Activated T-helper 1 cell treated with anti-CD3 and anti-CD28 coated beads, Interleukin-12 subunit alpha, Interleukin-12 subunit beta, Interleukin-2, Interleukin-4 antibody, amounts not matched to agents 30 ng/mL and 10 ng/mL and 1 ng/mL, durations not matched to agents 14 hours and 24 hours and 36 hours (primary cell): ENCODE measurements at regions of chr11 and their contacts with region 1.

Region 1: DNA sequence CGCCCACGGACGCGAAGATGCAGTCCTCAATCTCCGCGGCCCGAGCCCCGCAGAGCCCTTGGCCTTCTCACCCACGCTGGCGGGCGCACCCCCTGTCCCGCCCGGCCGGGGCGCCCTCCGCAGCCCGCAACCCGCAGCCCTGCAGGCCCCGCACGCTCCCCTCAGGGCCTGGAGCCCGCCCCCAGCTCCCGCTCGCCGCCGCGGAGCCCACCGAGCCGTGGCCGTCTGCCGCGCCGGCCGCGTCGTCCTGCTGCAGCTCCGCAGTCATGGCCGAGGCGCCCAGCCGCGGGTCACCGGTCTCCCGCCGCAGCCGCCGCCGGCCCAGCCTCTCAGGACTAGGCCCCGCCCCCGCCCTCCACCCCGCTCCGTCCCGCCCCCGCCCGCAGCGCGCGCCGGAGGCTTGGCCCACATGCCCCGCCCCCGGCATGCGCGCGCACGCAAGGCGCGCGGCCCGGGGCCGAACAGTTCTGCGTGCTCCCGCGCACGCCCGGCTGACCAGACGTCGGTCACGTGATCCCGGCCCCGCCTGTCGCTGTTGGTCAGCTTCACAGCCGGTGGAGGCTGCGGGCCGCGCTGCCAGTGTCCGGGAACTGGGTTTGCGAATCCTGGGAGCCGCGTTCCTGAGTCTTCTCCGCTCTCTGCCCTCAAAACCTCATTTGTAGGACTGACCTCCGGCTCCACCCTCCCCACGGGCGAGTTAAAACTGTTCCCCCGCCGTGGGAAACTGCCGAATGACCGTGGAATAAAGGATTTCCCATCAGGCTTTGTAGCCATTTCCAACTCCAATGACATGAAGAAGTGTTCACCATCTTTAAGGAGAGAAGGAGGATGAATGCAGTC is at the start of gene USP28:
- DNase-seq: peak; percentile 81
- H3K4me3 Mint-ChIP-seq: peak within 1 kb of the TSS; percentile 98
- H3K27ac Mint-ChIP-seq: peak within 1 kb of the TSS; percentile 99
- H3K4me1 Mint-ChIP-seq: peaks cover 64% of the 10 kb centered on the region
- H3K27me3 Mint-ChIP-seq: no peaks in the 10 kb centered on the region
- total RNA-seq, gene USP28: 29.0 and 30.9 TPM in 2 replicates

Region 2: GRCh38 chr11:111938687-111939160 is 1936.7 kb before region 1 on chr11:
- intact Hi-C with region 1: loop called (anchors 10 kb)
- DNase-seq: peak; percentile 22
- H3K4me3 Mint-ChIP-seq: peak overlapping the region; percentile 88
- H3K27ac Mint-ChIP-seq: peak overlapping the region; percentile 92
- H3K4me1 Mint-ChIP-seq: peaks cover 58% of the 10 kb centered on the region
- H3K27me3 Mint-ChIP-seq: no peaks in the 10 kb centered on the region

Region 3: GRCh38 chr11:113314389-113315301 is 560.8 kb before region 1 on chr11 and contains the start of gene TTC12:
- intact Hi-C with region 1: loop called (anchors 1 kb)
- DNase-seq: peak; percentile 89
- H3K4me3 Mint-ChIP-seq: peak within 1 kb of the TSS; percentile 81
- H3K27ac Mint-ChIP-seq: peak within 1 kb of the TSS; percentile 70
- H3K4me1 Mint-ChIP-seq: peaks cover 20% of the 10 kb centered on the region
- H3K27me3 Mint-ChIP-seq: no peaks in the 10 kb centered on the region
- total RNA-seq, gene TTC12: 7.4 and 8.5 TPM in 2 replicates

Region 4: GRCh38 chr11:113806406-113806805 is 69.0 kb before region 1 on chr11:
- intact Hi-C with region 1: loop called (anchors 2 kb)
- DNase-seq: peak; percentile 8
- H3K4me3 Mint-ChIP-seq: no peak overlapping the region
- H3K27ac Mint-ChIP-seq: no peak overlapping the region
- H3K4me1 Mint-ChIP-seq: no peaks in the 10 kb centered on the region
- H3K27me3 Mint-ChIP-seq: no peaks in the 10 kb centered on the region

Region 5: DNA sequence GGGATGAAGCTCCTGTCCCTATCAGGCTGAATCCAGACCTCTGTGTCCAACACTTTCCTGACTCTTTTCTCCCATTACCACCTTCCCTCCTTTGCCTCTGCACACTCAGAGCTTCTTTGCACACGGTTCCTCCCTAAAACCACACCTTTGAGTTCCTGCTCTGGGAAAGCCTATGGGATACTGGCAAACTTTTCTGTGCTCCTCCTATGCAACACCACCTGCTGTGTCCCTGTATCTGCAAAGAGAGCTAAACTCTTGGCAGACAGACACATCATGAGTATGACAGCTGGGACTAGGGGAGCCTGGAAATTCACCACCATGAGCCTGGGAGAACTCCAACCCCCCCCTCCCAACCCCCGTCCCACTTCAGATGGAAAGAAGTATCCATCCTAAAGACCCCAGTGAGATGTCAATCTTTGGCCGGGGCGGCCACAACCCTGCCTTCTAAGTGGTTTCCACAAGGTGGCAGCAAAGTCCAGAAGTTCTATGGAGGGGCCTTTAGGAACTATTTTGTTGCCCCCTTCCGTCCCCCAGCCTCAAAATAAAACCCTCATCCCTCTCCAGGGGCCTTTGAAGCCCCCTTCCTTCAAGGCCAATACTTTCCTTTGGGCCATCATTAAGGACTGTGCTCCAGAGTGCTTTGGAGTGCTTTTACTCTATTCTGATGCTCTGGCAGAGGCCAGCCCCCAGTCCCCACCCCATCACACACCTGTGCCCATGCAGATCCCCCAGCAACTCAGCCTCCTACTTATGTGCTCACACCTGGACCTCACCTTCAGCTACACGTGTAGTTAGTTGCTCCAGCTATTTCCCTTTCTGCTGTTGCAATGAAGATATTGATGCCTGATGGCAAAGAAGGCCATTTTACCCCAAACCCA is 118.9 kb after region 1 on chr11:
- intact Hi-C with region 1: no loop called
- DNase-seq: no peak
- H3K4me3 Mint-ChIP-seq: no peak overlapping the region
- H3K27ac Mint-ChIP-seq: no peak overlapping the region
- H3K4me1 Mint-ChIP-seq: no peaks in the 10 kb centered on the region
- H3K27me3 Mint-ChIP-seq: peaks cover 7% of the 10 kb centered on the region

Region 6: DNA sequence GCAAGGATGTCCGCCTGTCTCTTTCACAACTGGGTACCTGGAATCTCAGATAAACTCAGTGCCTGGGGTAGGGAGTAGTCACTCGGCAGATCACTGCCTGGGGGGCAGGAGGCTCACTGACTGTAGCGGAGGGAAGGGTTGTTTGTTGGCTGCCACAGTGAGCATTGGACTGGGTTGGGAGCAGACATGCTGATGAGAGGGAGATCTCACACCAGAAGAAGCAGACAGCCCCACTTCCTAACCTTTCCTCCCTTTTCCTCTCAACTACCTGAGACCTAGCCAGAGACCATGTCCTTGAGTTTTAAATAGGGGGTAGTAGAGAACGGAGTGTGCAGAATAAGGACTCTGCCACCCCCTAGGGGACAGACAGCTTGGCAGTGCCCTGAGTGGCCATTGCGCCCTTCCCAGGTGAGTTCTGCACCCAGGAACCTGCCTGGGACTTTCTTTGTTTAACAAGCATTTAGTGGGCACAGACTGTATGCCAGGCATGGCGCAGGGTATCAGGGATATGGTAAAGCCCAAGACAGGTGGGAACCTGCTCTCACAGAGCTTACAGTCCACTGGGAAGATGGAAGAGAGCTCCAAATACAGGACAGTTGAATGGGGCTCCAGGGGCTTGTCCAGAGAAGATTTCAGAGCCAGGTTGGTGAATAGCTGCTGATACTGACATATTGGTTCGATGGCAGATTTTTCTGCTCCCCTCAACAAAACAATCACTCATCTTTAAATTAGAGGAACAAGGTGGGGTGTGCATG is 305.0 kb after region 1 on chr11:
- intact Hi-C with region 1: loop called (anchors 10 kb)
- DNase-seq: no peak
- H3K4me3 Mint-ChIP-seq: no peak overlapping the region
- H3K27ac Mint-ChIP-seq: no peak overlapping the region
- H3K4me1 Mint-ChIP-seq: peaks cover 37% of the 10 kb centered on the region
- H3K27me3 Mint-ChIP-seq: peaks cover 10% of the 10 kb centered on the region

Region 7: DNA sequence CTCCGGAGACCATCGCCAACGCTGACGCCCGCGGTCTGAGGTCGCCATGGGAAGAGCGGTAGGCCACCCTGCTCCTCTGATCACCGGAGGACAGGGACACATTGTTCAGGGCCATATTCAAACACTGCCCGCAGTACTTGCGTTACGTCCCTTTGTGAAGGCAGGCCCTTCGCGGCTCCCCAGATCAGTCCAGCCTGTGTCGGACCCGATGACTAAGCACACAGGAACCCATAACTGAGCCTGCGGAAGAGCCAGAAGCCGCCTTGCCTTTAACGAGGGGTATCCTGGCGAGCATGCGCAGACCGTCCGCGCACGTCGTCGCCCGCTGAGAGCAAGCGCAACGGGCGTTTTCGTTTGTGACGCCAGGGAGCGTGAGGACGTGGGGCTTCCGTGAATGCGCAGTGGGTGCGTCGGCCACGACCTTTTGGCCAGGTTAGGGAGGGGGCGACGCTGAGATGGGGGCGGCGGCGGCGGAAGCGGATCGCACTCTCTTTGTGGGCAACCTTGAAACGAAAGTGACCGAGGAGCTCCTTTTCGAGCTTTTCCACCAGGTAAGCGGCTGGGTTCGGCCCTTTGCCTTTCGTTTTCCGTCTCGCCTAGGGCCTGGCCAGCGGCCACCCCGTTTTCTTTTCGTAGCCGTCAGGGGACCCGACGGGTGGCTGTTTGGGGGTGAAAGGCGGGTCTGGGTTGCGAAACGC is 524.9 kb after region 1 on chr11 and contains the starts of genes C11orf71 and RBM7:
- intact Hi-C with region 1: loop called (anchors 1 kb)
- DNase-seq: peak; percentile 97
- H3K4me3 Mint-ChIP-seq: peak within 1 kb of the TSS; percentile 92
- H3K27ac Mint-ChIP-seq: peak within 1 kb of the TSS; percentile 98
- H3K4me1 Mint-ChIP-seq: peaks cover 51% of the 10 kb centered on the region
- H3K27me3 Mint-ChIP-seq: no peaks in the 10 kb centered on the region
- total RNA-seq, gene C11orf71: 7.7 and 9.3 TPM in 2 replicates
- total RNA-seq, gene RBM7: 34.4 and 38.8 TPM in 2 replicates

Region 8: DNA sequence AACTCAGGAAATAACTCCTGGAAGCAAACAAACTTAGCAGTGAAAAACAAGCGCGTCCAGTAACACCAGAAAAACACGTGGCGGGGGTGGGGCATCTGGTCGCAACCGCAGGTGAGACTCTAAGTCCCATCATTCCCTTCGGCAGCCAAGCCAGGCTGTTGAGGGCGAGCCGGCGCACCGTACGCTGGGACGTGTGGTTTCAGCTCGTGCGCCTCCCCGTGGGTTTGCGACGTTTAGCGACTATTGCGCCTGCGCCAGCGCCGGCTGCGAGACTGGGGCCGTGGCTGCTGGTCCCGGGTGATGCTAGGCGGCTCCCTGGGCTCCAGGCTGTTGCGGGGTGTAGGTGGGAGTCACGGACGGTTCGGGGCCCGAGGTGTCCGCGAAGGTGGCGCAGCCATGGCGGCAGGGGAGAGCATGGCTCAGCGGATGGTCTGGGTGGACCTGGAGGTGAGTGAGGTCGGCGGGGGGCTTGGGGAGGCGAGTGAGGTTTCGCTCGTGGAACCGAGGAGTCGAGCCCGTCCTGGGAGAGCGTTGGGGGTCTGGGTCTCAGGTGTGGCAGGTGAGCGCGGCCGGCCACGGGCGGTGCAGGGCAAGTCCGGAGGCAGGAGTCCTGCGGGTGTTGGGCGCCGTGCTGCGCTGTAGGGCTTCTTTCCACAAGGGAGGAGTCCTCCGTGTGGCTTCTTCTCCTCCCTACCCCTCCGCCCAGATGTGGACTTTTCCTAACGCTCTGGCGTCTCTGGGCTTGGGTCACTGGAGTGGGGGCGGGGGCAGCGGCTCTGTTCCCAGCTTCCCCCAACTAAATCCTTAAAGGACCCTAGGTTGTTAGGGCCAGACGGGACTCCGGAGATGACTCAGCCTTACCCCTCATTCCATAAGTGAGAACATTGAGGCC is 564.0 kb after region 1 on chr11 and contains the start of gene REXO2:
- intact Hi-C with region 1: loop called (anchors 2 kb)
- DNase-seq: peak; percentile 92
- H3K4me3 Mint-ChIP-seq: peak within 1 kb of the TSS; percentile 91
- H3K27ac Mint-ChIP-seq: peak within 1 kb of the TSS; percentile 94
- H3K4me1 Mint-ChIP-seq: peaks cover 48% of the 10 kb centered on the region
- H3K27me3 Mint-ChIP-seq: no peaks in the 10 kb centered on the region
- total RNA-seq, gene REXO2: 109 and 111 TPM in 2 replicates